HAP-1 (cell line): ENCODE measurements at regions of chr4 and their contacts with region 1.

Region 1: DNA sequence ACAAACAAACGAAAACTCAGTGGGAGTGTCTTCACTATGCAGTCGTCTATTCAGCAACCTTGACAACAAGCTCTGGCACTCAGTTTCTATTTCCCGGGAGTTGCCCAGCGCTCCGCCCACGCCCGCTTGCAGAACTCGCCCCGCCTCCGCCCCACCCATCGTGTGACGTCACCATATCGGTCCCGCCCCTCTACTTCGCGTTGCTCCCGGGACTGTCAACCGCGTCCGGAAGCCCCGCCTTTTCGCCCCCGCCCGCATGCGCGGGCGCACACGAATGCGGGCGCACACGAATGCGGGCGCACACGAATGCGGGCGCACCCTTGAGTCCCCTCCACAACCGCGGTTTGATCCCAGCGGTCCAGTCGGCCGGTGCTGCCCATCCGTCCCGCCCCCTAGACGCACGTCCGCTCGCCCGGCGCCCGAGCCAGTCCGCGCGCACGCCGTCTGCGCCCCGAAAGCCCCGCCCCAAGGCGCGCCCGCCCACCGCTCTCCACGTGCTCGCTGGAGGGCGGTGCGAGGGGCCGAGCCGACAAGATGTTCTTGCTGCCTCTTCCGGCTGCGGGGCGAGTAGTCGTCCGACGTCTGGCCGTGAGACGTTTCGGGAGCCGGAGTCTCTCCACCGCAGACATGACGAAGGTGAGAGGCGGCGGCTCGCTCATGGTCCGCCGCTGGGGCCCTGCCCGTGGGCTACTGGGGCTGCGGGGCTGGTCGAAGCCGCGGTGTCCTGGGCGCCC is at the start of gene LAP3:
- DNase-seq: peak; percentile 98 to 99
- H3K4me3 ChIP-seq: peak within 1 kb of the TSS; percentile 54
- H3K4me1 ChIP-seq: peaks cover 13% of the 10 kb centered on the region
- H3K27me3 ChIP-seq: no peaks in the 10 kb centered on the region

Region 2: DNA sequence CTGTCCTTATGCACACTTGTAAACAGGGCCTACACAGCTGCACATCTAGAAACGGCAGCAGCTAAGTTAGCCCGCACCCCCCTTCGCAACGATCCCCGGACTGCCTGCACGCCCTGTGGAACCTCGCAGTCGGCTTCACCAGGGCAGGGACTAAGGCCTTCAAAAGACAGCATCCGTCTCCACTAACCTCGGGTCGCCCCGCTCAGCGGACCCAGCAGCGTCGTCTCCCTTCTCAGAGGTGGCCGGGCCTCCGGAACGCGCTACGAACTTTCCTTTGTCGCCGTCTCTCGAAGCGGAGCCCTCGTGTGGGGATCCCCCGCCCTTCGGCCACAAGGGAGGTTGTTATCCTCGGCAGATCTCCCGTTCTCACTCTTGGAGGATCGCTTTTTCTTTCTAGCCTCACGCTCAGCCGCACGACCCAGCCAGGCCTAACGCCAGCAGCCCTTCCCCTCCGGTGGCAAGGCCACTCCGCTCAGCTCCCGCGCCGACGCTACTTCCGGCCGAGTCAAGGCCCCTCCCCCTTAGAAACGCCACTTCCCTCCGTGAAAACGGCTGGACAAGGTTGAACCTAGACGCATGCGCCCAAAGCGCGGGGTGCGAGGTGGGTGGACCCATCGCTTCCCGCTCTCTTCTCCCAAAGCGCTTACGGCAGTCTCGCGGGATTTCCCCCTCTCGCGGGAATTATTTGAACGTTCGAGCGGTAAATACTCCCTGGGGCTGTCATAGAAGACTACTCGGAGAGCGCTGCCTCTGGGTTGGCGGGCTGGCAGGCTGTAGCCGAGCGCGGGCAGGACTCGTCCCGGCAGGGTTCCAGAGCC is 233.4 kb after region 1 on chr4 and contains the starts of genes DCAF16 and NCAPG:
- in situ Hi-C with region 1: loop called (anchors 25 kb)
- DNase-seq: peak; percentile 98 to 99
- H3K4me3 ChIP-seq: peak within 1 kb of the TSS; percentile 69
- H3K4me1 ChIP-seq: peaks cover 24% of the 10 kb centered on the region
- H3K27me3 ChIP-seq: no peaks in the 10 kb centered on the region